SK-N-SH (cell line): ENCODE measurements at regions of chr15 and their contacts with region 1.

Region 1: DNA sequence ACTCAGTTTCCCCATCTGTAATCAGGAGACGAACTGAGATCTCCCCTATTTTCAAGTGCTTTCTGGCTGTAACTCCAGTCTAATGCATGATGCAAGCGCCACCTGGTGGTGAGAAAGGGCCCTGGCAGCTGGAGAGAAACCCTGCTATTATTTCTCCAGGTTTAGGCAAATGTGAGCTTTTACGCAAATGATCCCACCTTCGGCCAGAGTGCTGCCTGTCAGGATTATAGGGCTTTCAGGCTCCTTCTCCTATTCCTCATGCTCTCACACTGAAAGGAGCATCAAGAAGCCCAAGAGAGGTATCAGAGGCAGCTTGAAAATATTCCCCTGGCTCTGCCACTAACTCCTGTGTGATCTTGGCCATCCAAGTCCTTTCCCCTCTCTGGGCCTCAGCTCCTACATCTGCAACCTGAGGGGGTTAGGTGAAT is 93.9 kb upstream of the RASGRF1 start:
- DNase-seq: peak; percentile 77
- H3K4me3 ChIP-seq: peak overlapping the region in 1 of 2 experiments; percentile 12; a peak in 1 of 4 replicates
- H3K27ac ChIP-seq: no peak overlapping the region
- H3K4me1 ChIP-seq: no peaks in the 10 kb centered on the region
- H3K27me3 ChIP-seq: 0 out of 2 replicates have a peak, but pooled peaks cover 5% of the 10 kb centered on the region
- CTCF ChIP-seq: peak; percentile 98
- EP300 ChIP-seq: no peak
- RAD21 ChIP-seq: peak; percentile 94

Region 2: GRCh38 chr15:78930556-78931401 is 253.7 kb before region 1 on chr15:
- CTCF ChIA-PET with region 1: interaction called, 14 read pairs
- POLR2A ChIA-PET with region 1: no interaction called
- DNase-seq: peak; percentile 72
- H3K4me3 ChIP-seq: no peak overlapping the region
- H3K27ac ChIP-seq: peak overlapping the region; percentile 30 to 82
- H3K4me1 ChIP-seq: peaks cover 8 to 31% of the 10 kb centered on the region in 2 experiments; a peak in 3 of 4 replicates
- H3K27me3 ChIP-seq: no peaks in the 10 kb centered on the region
- CTCF ChIP-seq: no peak
- EP300 ChIP-seq: peak; percentile 49 to 57; a peak in 3 of 4 replicates
- RAD21 ChIP-seq: no peak

Region 3: GRCh38 chr15:79035111-79035601 is 149.3 kb before region 1 on chr15:
- CTCF ChIA-PET with region 1: interaction called, 629 read pairs
- POLR2A ChIA-PET with region 1: no interaction called
- DNase-seq: peak; percentile 73
- H3K4me3 ChIP-seq: no peak overlapping the region
- H3K27ac ChIP-seq: no peak overlapping the region
- H3K4me1 ChIP-seq: peaks cover 0 to 3% of the 10 kb centered on the region in 2 experiments; a peak in 1 of 4 replicates
- H3K27me3 ChIP-seq: peaks cover 14% of the 10 kb centered on the region; the same call in 1 of the 2 replicates
- CTCF ChIP-seq: peak; percentile 20; the same call in 1 of the 2 replicates
- EP300 ChIP-seq: no peak
- RAD21 ChIP-seq: no peak

Region 4: GRCh38 chr15:79086814-79087213 is 97.7 kb before region 1 on chr15:
- CTCF ChIA-PET with region 1: interaction called, 20 read pairs
- POLR2A ChIA-PET with region 1: no interaction called
- DNase-seq: no peak
- H3K4me3 ChIP-seq: no peak overlapping the region
- H3K27ac ChIP-seq: no peak overlapping the region
- H3K4me1 ChIP-seq: peaks cover 0 to 9% of the 10 kb centered on the region in 2 experiments; a peak in 1 of 4 replicates
- H3K27me3 ChIP-seq: peaks cover 29% of the 10 kb centered on the region
- CTCF ChIP-seq: no peak
- EP300 ChIP-seq: no peak
- RAD21 ChIP-seq: no peak

Region 5: GRCh38 chr15:79130535-79131130 is 53.8 kb before region 1 on chr15:
- CTCF ChIA-PET with region 1: interaction called, 24 read pairs
- POLR2A ChIA-PET with region 1: no interaction called
- DNase-seq: no peak
- H3K4me3 ChIP-seq: no peak overlapping the region
- H3K27ac ChIP-seq: no peak overlapping the region
- H3K4me1 ChIP-seq: no peaks in the 10 kb centered on the region
- H3K27me3 ChIP-seq: no peaks in the 10 kb centered on the region
- CTCF ChIP-seq: no peak; the same call in 1 of the 2 replicates
- EP300 ChIP-seq: no peak
- RAD21 ChIP-seq: 0 out of 2 replicates have a peak, but pooled peaks have one; percentile 13

Region 6: GRCh38 chr15:79168922-79169456 is 15.5 kb before region 1 on chr15:
- CTCF ChIA-PET with region 1: interaction called, 90 read pairs
- POLR2A ChIA-PET with region 1: no interaction called
- DNase-seq: no peak
- H3K4me3 ChIP-seq: no peak overlapping the region
- H3K27ac ChIP-seq: no peak overlapping the region
- H3K4me1 ChIP-seq: peaks cover 0 to 31% of the 10 kb centered on the region in 2 experiments; a peak in 2 of 4 replicates
- H3K27me3 ChIP-seq: no peaks in the 10 kb centered on the region
- CTCF ChIP-seq: no peak
- EP300 ChIP-seq: no peak
- RAD21 ChIP-seq: no peak

Region 7: GRCh38 chr15:79208179-79208578 is 23.7 kb after region 1 on chr15:
- CTCF ChIA-PET with region 1: interaction called, 37 read pairs
- POLR2A ChIA-PET with region 1: no interaction called
- DNase-seq: no peak
- H3K4me3 ChIP-seq: no peak overlapping the region
- H3K27ac ChIP-seq: no peak overlapping the region
- H3K4me1 ChIP-seq: peaks cover 0 to 3% of the 10 kb centered on the region in 2 experiments; a peak in 1 of 4 replicates
- H3K27me3 ChIP-seq: no peaks in the 10 kb centered on the region
- CTCF ChIP-seq: no peak; the same call in 1 of the 2 replicates
- EP300 ChIP-seq: no peak
- RAD21 ChIP-seq: no peak

Region 8: DNA sequence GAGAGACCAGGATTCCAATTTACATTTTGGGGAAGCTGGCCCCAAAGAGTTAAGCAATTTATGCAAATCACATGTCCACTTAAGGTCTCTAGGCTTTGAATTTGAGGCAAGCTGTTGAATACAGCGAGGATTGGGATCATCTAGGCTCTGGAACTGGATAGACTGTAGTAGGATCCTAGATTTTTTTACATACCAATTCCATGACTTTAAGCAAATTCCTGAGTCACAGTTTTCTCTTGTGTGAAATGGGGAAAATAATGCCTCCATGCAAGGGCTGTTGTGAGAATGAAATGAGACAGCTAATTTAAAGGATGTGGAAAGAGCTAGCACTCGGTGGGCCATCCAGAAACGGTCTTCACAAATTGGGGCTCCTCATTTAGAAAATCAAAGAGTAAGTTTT is 351.1 kb after region 1 on chr15:
- CTCF ChIA-PET with region 1: no interaction called
- POLR2A ChIA-PET with region 1: no interaction called
- DNase-seq: no peak
- H3K4me3 ChIP-seq: no peak overlapping the region
- H3K27ac ChIP-seq: no peak overlapping the region
- H3K4me1 ChIP-seq: no peaks in the 10 kb centered on the region
- H3K27me3 ChIP-seq: no peaks in the 10 kb centered on the region
- CTCF ChIP-seq: no peak
- EP300 ChIP-seq: no peak
- RAD21 ChIP-seq: no peak